ENCODE measurements at regions of chr6 and their contacts with region 1.

Region 1: GRCh38 chr6:122033539-122034181 is 365.8 kb upstream of the HSF2 start:
- DNase-seq: no peak
- ATAC-seq: peak; percentile 65
- H3K4me3 Mint-ChIP-seq: no peak overlapping the region
- H3K27ac Mint-ChIP-seq: no peak overlapping the region
- H3K4me1 Mint-ChIP-seq: no peaks in the 10 kb centered on the region
- H3K27me3 Mint-ChIP-seq: peaks cover 6% of the 10 kb centered on the region

Region 2: DNA sequence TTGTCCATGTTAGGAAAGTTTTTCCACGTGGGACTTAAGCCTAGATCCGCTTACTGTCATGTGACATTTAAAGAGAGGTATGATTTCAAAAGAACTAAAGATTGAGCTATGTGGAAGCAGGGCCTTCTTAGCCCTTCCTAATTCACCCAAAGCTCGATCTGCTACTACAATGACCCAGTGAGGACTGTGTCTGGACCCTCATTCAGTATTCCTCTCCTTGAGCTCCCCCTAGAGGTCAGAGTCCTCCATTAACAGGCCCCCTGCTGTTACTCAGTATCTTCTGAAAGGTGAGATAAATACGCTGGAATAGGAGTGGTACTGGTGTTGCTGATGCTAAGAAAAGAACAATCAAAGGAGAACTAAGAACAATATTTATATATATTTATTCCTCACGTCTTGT is 184.2 kb before region 1 on chr6:
- CTCF ChIA-PET with region 1: no interaction called
- POLR2A ChIA-PET with region 1: no interaction called
- intact Hi-C with region 1: loop called in 1 of 2 experiments (anchors 5 kb)
- DNase-seq: peak; percentile 52
- ATAC-seq: peak; percentile 70
- H3K4me3 Mint-ChIP-seq: no peak overlapping the region
- H3K27ac Mint-ChIP-seq: no peak overlapping the region
- H3K4me1 Mint-ChIP-seq: peaks cover 14% of the 10 kb centered on the region
- H3K27me3 Mint-ChIP-seq: no peaks in the 10 kb centered on the region

Region 3: DNA sequence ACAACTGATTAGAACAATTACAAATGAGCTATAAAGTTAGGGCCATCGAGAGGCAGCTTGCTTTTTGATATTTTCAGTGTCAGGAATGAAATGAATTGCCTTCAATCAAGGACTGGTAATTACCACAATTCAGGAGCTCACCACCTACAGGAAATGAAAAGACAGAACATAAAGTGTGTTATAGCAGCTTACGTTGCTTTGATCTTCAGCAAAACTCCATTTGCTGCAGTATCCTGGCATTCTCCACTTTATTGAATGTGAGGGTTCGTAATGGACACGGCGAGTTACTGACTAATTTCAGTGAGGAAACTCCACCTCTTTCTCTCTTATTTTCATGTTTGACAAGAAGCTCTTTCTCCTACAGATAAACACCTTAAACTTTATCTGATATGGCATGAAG is 74.2 kb before region 1 on chr6:
- CTCF ChIA-PET with region 1: no interaction called
- POLR2A ChIA-PET with region 1: no interaction called
- intact Hi-C with region 1: no loop called
- DNase-seq: no peak
- ATAC-seq: peak; percentile 33
- H3K4me3 Mint-ChIP-seq: no peak overlapping the region
- H3K27ac Mint-ChIP-seq: peak overlapping the region; percentile 19
- H3K4me1 Mint-ChIP-seq: peaks cover 9% of the 10 kb centered on the region
- H3K27me3 Mint-ChIP-seq: no peaks in the 10 kb centered on the region

Region 4: DNA sequence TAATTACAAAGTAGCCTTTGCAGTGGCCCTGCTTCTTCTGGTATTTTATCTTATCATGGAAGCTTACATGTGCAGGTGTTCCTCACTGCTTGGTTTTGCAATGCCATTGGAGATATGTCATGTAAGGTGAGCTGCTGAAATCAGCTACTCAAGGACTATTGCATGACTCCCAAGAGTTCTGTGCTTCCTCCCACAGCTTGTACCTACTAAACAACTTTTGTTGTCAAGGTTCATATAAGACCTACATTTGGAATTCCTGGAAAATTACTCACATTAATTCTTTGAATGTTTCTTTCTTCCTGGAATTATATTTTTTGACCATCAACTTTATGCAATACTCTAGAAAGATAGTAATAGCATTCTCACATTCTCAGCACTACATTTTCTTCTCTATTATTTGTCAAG is 61.7 kb before region 1 on chr6:
- CTCF ChIA-PET with region 1: no interaction called
- POLR2A ChIA-PET with region 1: no interaction called
- intact Hi-C with region 1: no loop called
- DNase-seq: no peak
- ATAC-seq: no peak
- H3K4me3 Mint-ChIP-seq: no peak overlapping the region
- H3K27ac Mint-ChIP-seq: no peak overlapping the region
- H3K4me1 Mint-ChIP-seq: no peaks in the 10 kb centered on the region
- H3K27me3 Mint-ChIP-seq: peaks cover 2% of the 10 kb centered on the region

Region 5: DNA sequence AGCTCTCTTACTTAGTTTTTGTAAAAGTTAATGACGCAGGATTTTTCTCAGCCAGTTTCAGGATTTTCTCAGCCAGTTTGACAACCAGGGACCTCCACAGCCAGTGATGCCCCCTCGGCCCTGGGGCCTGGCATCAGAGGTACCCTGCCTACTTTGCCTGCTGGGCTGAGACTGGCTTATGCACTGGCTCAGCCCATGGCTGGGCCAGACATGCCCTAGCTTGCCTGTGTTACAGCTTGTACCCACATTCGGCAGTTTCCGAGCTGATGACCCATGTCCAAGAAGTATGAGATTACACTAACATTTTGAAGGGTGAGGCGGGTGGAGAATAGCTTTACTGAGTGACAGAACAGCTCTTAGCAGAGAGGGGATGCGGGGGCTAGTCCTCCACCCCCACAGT is 40.3 kb before region 1 on chr6:
- CTCF ChIA-PET with region 1: no interaction called
- POLR2A ChIA-PET with region 1: no interaction called
- intact Hi-C with region 1: no loop called
- DNase-seq: no peak
- ATAC-seq: no peak
- H3K4me3 Mint-ChIP-seq: no peak overlapping the region
- H3K27ac Mint-ChIP-seq: no peak overlapping the region
- H3K4me1 Mint-ChIP-seq: peaks cover 3% of the 10 kb centered on the region
- H3K27me3 Mint-ChIP-seq: no peaks in the 10 kb centered on the region

Measured in activated CD4-positive, alpha-beta T cell treated with anti-CD3 and anti-CD28 coated beads for 36 hours (primary cell).